IMR-90 (cell line): ENCODE measurements at regions of chr6 and their contacts with region 1.

Region 1: DNA sequence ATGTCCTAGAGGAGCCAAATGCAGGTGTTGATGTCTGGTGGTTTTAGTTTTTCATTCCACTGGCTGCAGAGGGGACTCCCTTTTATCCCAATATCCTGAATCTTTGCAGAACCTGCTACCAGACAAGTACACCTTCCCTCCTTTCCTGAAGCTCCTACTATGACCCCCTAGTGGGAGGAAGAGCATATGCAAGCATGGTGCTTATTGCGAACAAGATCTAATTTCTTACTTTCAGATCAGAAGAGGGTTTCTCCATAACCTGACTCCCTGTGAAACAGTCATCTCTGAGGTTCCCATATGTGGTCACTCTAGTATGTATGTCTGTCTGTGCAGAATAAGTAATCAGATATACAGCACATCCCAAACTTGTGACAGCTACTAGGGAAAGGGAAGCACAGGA is 277.2 kb downstream of the ARHGAP18 start:
- DNase-seq: peak; percentile 31
- ATAC-seq: no peak
- H3K4me3 ChIP-seq: no peak overlapping the region
- H3K27ac ChIP-seq: no peak overlapping the region
- H3K4me1 ChIP-seq: no peaks in the 10 kb centered on the region
- H3K27me3 ChIP-seq: no peaks in the 10 kb centered on the region
- CTCF ChIP-seq: peak; percentile 15; the same call in 1 of the 2 replicates
- POLR2A ChIP-seq: no peak
- RAD21 ChIP-seq: no peak

Region 2: DNA sequence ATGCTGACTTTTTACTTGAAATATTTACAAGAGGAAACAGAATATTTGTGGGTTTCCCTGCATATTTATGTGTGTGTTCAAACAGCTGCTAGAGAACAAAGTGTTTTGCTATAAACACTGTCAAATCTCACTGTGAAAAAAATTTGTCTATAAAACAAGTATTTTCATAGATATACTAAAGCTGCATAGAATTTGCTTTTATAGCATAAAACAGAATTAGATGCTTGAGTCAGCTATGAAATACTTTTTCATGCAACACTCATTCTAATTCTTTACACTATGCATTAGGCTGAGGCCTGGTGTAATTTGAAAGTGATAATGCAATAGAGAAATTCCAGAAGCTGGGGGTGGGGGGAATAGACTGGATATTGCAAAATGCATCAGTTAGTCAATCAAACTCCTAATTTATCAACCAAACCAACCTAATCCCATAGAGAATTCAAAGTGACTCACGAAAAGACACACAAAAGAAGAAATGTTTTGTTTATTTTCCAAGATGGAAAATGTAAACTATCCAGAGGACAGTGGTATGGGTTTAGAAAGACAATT is 401.6 kb before region 1 on chr6:
- CTCF ChIA-PET with region 1: no interaction called
- POLR2A ChIA-PET with region 1: interaction called, 10 read pairs
- dilution Hi-C with region 1: no loop called
- in situ Hi-C with region 1: no loop called
- intact Hi-C with region 1: no loop called
- DNase-seq: peak; percentile 60
- ATAC-seq: peak; percentile 65
- H3K4me3 ChIP-seq: no peak overlapping the region
- H3K27ac ChIP-seq: no peak overlapping the region
- H3K4me1 ChIP-seq: no peaks in the 10 kb centered on the region
- H3K27me3 ChIP-seq: no peaks in the 10 kb centered on the region
- CTCF ChIP-seq: no peak
- POLR2A ChIP-seq: no peak
- RAD21 ChIP-seq: no peak

Region 3: GRCh38 chr6:129381885-129382284 is 50.9 kb before region 1 on chr6:
- CTCF ChIA-PET with region 1: no interaction called
- POLR2A ChIA-PET with region 1: no interaction called
- dilution Hi-C with region 1: no loop called
- in situ Hi-C with region 1: no loop called
- intact Hi-C with region 1: no loop called
- DNase-seq: no peak
- ATAC-seq: no peak
- H3K4me3 ChIP-seq: no peak overlapping the region
- H3K27ac ChIP-seq: no peak overlapping the region
- H3K4me1 ChIP-seq: no peaks in the 10 kb centered on the region
- H3K27me3 ChIP-seq: peaks cover 38% of the 10 kb centered on the region
- CTCF ChIP-seq: no peak
- POLR2A ChIP-seq: no peak
- RAD21 ChIP-seq: no peak

Region 4: GRCh38 chr6:129481706-129482105 is 49.0 kb after region 1 on chr6:
- CTCF ChIA-PET with region 1: no interaction called
- POLR2A ChIA-PET with region 1: no interaction called
- dilution Hi-C with region 1: no loop called
- in situ Hi-C with region 1: no loop called
- intact Hi-C with region 1: loop called (anchors 5 kb)
- DNase-seq: peak; percentile 63
- ATAC-seq: peak; percentile 53
- H3K4me3 ChIP-seq: no peak overlapping the region
- H3K27ac ChIP-seq: no peak overlapping the region
- H3K4me1 ChIP-seq: peaks cover 1% of the 10 kb centered on the region; the same call in 1 of the 2 replicates
- H3K27me3 ChIP-seq: no peaks in the 10 kb centered on the region
- CTCF ChIP-seq: no peak
- POLR2A ChIP-seq: no peak
- RAD21 ChIP-seq: no peak

Region 5: DNA sequence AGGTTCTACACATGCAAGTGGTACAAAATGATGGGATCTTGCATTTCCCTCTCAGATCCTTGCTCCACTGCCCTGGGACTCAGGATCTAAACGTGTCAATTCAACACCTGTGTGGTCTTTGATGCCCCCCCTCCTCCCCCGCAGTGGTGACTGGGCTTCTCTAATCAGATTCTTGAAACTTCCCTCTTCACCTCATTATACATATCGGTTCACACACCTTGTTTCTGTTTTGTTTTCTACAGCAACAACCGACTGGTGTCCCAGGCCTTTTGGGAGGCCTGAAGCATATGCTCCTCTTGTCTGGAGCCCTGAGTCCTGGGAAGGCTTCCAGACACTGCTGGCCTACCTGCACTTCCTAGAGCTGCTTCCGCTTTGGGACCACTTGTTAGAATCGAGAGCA is 770.0 kb after region 1 on chr6:
- CTCF ChIA-PET with region 1: no interaction called
- POLR2A ChIA-PET with region 1: no interaction called
- dilution Hi-C with region 1: no loop called
- in situ Hi-C with region 1: no loop called
- intact Hi-C with region 1: no loop called
- DNase-seq: no peak
- ATAC-seq: no peak
- H3K4me3 ChIP-seq: no peak overlapping the region
- H3K27ac ChIP-seq: no peak overlapping the region
- H3K4me1 ChIP-seq: no peaks in the 10 kb centered on the region
- H3K27me3 ChIP-seq: no peaks in the 10 kb centered on the region
- CTCF ChIP-seq: no peak
- POLR2A ChIP-seq: no peak
- RAD21 ChIP-seq: no peak